ENCODE measurements at regions of chr6 and their contacts with region 1.

Region 1: DNA sequence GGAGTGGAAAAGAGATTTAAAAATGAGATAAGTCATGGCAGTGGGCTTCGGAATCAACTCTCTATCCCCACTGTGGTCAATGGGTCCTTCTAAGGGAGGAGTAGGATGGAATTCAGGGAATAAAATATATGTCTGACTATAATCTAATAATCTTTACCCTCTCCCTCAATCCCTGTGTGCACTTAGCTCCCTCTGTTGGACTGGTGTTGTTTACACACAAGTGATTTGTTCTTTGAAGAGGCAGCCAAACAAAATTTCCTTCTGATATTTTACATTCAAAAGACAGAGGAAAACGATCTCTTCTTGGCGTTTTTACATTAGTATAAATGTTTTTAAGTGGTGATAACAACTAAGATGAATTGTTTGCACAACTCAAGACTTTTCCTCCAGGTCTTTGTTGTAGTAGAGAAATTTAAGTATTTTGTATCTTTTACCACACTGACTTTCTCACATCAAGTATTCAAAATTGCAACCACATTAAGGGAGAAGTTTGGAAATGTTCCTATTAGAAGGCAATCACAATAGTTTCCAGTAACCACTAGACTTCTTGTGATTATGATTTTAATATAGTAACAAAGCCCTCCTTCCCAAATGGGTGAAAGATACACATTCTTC is 317.8 kb downstream of the CENPW start:
- DNase-seq: peak; percentile 11
- H3K4me3 ChIP-seq: no peak overlapping the region
- H3K27ac ChIP-seq: no peak overlapping the region
- H3K4me1 ChIP-seq: no peaks in the 10 kb centered on the region
- H3K27me3 ChIP-seq: no peaks in the 10 kb centered on the region
- CTCF ChIP-seq: peak; percentile 34 to 60 (median 58)
- EP300 ChIP-seq: no peak
- POLR2A ChIP-seq: no peak

Region 2: GRCh38 chr6:126033696-126034095 is 624.0 kb before region 1 on chr6:
- in situ Hi-C with region 1: loop called in 1 of 4 experiments (anchors 25 kb)
- intact Hi-C with region 1: no loop called
- DNase-seq: peak; percentile 19
- H3K4me3 ChIP-seq: no peak overlapping the region
- H3K27ac ChIP-seq: no peak overlapping the region
- H3K4me1 ChIP-seq: peaks cover 0 to 8% (median 2%) of the 10 kb centered on the region in 4 donors
- H3K27me3 ChIP-seq: no peaks in the 10 kb centered on the region
- CTCF ChIP-seq: peak; percentile 34 to 72 (median 54)
- EP300 ChIP-seq: no peak
- POLR2A ChIP-seq: no peak

Region 3: GRCh38 chr6:126361832-126362412 is 295.7 kb before region 1 on chr6:
- in situ Hi-C with region 1: loop called in 1 of 4 experiments (anchors 25 kb)
- intact Hi-C with region 1: no loop called
- DNase-seq: no peak
- H3K4me3 ChIP-seq: no peak overlapping the region
- H3K27ac ChIP-seq: no peak overlapping the region
- H3K4me1 ChIP-seq: no peaks in the 10 kb centered on the region
- H3K27me3 ChIP-seq: no peaks in the 10 kb centered on the region
- CTCF ChIP-seq: no peak
- EP300 ChIP-seq: no peak
- POLR2A ChIP-seq: no peak

Region 4: DNA sequence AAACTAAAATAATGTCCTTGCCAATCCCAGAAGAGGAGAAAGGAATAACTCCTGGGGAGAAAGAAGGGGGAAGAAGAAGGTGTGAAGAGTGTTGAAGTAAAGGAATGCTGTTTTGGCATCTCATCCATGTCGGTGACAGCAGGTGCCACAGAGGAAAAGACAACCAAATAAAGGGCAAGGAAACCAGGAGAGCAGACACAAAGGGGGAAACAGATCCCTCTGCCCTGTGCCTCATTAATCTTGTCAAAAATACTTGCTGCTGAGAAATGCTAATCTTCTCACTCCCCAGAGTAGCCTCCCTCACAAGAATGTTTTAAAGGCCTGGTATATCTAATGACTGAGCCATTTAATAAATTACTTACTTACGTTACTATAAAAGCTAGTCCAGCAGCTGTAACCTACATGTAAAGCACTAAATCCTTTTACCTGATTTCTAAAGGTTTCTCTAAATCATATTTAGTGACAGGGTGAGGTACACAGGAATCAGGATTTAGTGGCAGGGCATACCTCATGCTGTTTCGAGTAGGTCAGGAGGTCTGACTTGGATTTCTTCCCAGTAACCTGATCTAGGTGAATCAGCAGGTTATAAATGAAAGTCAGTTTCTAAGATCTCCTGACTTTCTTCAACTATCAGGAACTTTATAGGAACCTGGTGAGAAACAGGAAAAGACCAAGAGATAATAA is 59.3 kb after region 1 on chr6:
- in situ Hi-C with region 1: no loop called
- intact Hi-C with region 1: no loop called
- DNase-seq: no peak
- H3K4me3 ChIP-seq: no peak overlapping the region
- H3K27ac ChIP-seq: no peak overlapping the region
- H3K4me1 ChIP-seq: no peaks in the 10 kb centered on the region
- H3K27me3 ChIP-seq: no peaks in the 10 kb centered on the region
- CTCF ChIP-seq: no peak
- EP300 ChIP-seq: no peak
- POLR2A ChIP-seq: no peak

Region 5: DNA sequence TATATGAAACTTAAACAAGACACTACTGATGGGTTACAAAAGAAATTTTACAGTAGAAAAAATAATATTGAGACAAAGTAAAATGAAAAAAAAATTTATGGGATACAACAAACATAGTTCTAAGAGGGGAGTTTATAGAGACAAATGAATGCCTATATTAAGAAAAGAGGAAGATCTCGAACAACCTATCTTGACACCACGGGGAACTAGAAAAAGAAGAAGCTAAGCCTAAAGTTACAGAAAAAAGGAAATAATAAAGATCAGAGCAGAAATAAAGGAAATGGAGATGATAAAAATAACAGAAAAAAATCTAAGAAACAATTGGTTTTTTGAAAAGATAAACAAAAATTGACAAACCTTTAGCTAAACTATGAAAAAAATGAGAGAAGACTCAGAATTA is 694.9 kb after region 1 on chr6:
- in situ Hi-C with region 1: no loop called
- intact Hi-C with region 1: loop called (anchors 5 kb)
- DNase-seq: no peak
- H3K4me3 ChIP-seq: no peak overlapping the region
- H3K27ac ChIP-seq: no peak overlapping the region
- H3K4me1 ChIP-seq: no peaks in the 10 kb centered on the region
- H3K27me3 ChIP-seq: no peaks in the 10 kb centered on the region
- CTCF ChIP-seq: no peak
- EP300 ChIP-seq: no peak
- POLR2A ChIP-seq: no peak